Heart right ventricle (tissue), 16 donors: ENCODE measurements at regions of chr11 and their contacts with region 1.

Region 1: DNA sequence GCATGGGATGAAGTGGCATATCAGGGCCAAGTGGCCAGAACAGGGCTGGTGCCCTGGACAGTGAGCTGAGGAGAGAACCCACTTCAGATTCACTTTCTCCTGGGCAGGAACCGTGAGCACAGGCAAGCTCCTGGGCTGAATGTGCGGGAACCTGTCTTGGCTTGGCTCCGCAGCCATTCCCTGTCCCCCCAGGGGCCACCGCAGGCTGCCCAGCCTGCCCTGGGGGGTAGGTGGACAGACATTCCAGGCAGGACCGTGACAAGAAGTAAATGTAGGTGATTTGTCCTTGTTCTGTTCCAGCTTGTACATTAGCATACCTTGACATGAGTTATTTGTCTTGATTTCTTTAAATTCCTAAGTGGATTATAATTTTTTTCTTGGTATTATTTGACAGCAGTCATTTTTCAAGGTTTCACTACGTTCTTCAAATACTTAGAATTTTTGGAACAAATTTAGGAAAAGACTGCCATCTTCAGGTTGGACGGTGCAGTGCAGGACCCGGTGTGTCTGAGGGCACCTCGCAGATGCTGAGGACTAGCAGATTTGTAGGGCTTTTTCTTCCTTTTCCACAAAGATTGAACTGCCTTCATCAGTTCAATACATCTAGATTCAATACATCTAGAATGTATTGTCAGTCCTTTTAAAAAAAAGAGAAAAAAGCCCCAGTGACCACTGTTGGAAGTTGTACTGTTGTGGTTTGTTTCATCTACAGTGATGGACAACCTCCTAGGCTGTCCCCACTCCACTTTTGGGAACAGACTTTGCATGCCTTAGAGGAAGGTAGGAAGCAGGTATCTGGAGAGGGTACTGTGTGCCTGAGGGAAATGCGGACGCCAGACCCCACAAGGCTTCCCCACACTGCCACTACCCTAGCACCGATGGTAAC is 115.1 kb upstream of the RASSF10 start:
- DNase-seq: peak; percentile 60 to 66
- ATAC-seq: peak in 3 of 8 donors; percentile 23 to 31 (median 30)
- H3K4me3 ChIP-seq: no peak overlapping the region
- H3K27ac ChIP-seq: peak overlapping the region in 5 of 10 donors; percentile 12 to 50 (median 25)
- H3K4me1 ChIP-seq: peaks cover 10 to 53% (median 33%) of the 10 kb centered on the region in 9 donors
- H3K27me3 ChIP-seq: no peaks in the 10 kb centered on the region
- CTCF ChIP-seq: peak; percentile 72 to 96 (median 90)

Region 2: DNA sequence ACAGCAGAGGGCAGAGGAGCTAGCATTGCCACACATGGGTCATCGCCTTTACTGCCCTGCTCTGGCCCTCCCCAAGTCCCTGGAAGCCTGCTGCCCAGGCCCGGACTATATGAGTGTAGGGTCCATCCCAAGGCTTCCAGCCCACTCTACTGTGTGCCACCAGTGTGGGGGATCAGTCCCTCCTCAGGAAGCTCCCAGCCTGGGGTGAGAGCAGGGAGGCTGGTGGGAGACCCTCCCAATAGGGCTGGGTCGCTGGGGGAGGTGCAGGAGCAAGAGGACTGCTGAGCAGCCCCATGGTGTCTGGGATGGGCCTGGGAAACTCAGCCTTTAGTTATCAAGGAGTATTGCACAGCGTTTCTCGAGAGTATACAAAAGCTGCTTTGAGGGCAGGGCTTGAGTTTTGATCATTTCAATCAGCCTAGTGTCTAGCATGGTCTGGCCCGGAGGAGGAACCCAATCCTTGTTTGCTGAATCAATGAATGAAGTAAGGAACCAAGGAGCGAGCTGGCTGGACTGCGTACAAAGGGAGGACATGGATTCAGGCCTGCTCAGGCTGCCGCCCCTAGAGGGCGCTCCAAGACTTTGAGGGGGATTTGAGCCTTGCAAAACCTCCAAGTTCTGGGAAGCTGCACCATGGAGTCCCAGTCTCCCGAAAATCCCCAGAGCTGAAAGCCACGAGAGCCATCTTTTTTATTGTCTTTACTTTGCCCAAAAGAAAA is 605.7 kb before region 1 on chr11:
- intact Hi-C with region 1: loop called in 1 of 10 experiments (anchors 5 kb)
- DNase-seq: peak; percentile 77 to 83
- ATAC-seq: peak; percentile 55 to 80 (median 67)
- H3K4me3 ChIP-seq: no peak overlapping the region
- H3K27ac ChIP-seq: peak overlapping the region in 8 of 10 donors; percentile 8 to 79 (median 56)
- H3K4me1 ChIP-seq: peaks cover 0 to 47% (median 20%) of the 10 kb centered on the region in 9 donors
- H3K27me3 ChIP-seq: no peaks in the 10 kb centered on the region
- CTCF ChIP-seq: peak; percentile 78 to 92 (median 87)

Region 3: DNA sequence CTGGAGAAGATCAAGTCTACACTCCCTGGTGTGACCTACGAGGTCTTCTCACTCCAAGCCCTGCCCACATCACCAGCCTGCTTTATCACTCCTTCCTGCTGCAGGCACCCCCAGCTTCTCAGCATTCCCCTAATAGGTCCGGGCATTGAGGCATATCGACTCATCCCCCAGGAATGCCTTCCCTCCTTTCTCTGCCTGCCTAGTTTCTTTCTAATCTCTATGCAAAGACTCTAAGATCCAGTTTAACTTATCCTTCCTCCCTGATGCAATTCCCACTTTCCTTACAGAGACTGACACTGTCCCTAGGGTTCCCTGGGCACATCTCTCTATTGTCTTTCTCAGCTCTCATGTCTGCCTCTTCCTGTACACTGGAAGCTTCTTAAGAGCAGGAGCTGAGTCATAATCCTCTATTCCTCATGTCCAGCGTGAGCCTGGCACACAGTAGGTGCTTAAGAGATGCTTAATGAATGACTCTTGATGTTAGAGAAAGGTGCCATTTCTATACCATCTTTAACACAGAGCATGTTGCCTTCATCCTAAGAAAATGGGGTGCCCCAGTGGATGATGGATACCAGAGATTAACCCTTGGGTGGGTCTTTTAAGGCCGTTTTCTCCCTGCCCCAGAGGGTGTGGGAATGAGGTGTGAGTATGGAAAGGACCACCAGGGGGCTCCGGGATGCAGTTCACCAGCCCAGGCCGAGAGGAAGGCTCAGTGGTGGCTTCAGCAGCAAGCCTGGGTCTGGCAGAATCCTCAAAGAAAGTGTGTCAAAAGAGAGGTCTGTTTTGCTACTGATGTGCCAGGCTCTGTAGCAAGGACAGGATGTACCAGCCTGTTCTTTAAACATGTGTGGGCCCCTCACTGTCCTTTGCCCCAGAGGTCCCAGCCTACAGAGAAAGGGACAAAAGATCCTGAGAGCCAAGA is 482.0 kb before region 1 on chr11:
- intact Hi-C with region 1: loop called (anchors 2 to 10 kb)
- DNase-seq: peak; percentile 57 to 78
- ATAC-seq: peak; percentile 73 to 93 (median 85)
- H3K4me3 ChIP-seq: no peak overlapping the region
- H3K27ac ChIP-seq: peak overlapping the region in 4 of 10 donors; percentile 4 to 31 (median 10)
- H3K4me1 ChIP-seq: peaks cover 3 to 79% (median 53%) of the 10 kb centered on the region in 9 donors
- H3K27me3 ChIP-seq: no peaks in the 10 kb centered on the region
- CTCF ChIP-seq: peak; percentile 67 to 88 (median 80)

Region 4: DNA sequence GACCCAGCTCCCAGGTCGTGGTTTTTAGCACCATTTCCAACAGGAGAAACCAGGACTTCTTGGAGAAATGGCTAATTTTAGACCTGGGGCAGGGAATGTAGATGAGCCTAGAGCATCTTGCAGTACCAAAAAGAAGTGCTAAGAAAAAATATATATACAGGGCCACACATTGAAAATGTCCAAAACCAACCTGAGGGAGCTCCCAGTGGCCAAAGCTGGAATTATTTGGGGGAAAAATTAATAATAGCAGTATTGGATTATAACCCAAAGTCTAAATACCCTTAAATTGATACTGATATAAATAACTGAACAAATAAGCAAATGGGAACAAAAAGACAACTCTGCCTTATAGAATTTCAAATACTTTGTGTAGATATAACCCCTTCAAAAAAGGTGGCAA is 408.7 kb before region 1 on chr11:
- intact Hi-C with region 1: loop called in 1 of 10 experiments (anchors 10 kb)
- DNase-seq: no peak
- ATAC-seq: no peak
- H3K4me3 ChIP-seq: no peak overlapping the region
- H3K27ac ChIP-seq: no peak overlapping the region
- H3K4me1 ChIP-seq: peaks cover 2 to 22% (median 14%) of the 10 kb centered on the region in 9 donors
- H3K27me3 ChIP-seq: no peaks in the 10 kb centered on the region
- CTCF ChIP-seq: peak in 8 of 9 donors; percentile 13 to 44 (median 32)

Region 5: DNA sequence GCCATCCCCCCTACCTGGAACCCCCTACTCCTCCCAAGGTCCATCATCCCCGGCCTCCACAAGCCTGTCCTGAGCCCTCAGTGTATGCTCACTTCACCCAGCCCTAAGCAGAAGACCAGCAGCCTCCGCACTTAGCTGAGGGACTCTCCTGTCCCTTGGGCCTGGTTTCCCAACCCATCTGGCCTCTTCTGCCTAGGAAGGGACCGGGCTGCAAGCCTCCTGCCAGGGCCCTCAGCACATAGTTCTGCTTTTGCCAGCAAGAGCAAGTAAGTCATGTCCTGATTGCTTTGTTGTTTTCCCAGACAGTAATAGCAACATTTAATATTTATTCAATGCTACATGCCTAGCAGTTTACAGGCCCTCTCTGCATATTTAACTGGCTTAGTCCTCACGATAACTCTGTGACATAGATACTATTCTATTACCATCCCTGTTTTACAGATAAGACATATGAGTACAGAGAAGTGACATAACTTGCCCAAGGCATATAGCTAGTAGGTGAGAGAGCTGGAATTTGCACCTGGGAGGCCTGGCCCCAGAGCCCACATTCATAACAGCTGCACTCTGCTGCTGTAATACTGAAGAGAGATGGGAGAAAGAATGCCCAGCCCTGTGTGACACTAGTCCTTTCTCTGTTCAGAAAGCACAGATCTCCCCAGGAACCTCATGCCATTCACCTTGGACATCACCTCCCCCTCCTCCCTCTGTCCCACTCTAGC is 377.5 kb before region 1 on chr11:
- intact Hi-C with region 1: loop called in 2 of 10 experiments (anchors 10 kb)
- DNase-seq: no peak
- ATAC-seq: peak in 2 of 8 donors; percentile 20 to 49
- H3K4me3 ChIP-seq: no peak overlapping the region
- H3K27ac ChIP-seq: peak overlapping the region in 1 of 10 donors; percentile 7
- H3K4me1 ChIP-seq: peaks cover 0 to 15% (median 0%) of the 10 kb centered on the region in 9 donors
- H3K27me3 ChIP-seq: no peaks in the 10 kb centered on the region
- CTCF ChIP-seq: no peak

Region 6: DNA sequence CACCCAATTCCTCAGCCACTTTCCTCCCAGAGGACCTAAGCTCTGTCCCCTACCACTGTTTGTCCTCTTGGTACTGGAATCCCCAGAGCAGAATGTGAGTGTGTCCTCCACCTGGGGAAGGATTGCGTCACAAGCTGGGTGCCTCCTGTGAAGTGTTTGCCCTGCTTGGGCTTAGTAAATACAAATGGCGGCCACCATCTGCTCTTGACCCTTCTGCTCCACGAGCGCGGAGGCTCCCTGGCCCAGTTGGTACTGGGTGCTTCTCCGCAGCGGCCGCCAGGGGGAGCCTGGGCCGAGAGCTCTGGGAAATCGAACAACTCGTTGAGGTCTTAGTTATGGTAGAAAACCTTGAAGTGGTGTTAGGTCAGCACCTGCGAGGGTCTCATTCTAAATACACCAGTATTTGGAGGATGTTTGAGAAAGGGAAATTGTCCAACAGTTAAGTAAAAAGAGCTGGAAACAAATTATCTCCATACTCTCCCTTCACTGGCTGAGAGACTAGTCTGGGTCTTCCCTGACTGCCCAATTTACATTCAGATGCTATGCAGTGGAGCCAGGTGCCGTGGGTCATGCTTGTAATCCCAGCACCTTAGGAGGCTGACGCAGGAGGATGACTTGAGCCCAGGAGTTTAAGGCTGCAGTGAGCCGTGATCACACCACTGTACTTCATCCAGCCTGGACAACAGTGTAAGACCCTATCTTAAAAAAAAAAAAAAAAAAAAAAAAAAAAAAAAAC is 294.5 kb before region 1 on chr11:
- intact Hi-C with region 1: loop called in 9 of 10 experiments (anchors 2 to 10 kb)
- DNase-seq: peak; percentile 22 to 57
- ATAC-seq: peak in 7 of 8 donors; percentile 41 to 72 (median 52)
- H3K4me3 ChIP-seq: no peak overlapping the region
- H3K27ac ChIP-seq: no peak overlapping the region
- H3K4me1 ChIP-seq: peaks cover 0 to 36% (median 13%) of the 10 kb centered on the region in 9 donors
- H3K27me3 ChIP-seq: no peaks in the 10 kb centered on the region
- CTCF ChIP-seq: peak; percentile 46 to 78 (median 68)

Region 7: GRCh38 chr11:13210424-13210823 is 316.4 kb after region 1 on chr11:
- intact Hi-C with region 1: no loop called
- DNase-seq: peak in 1 of 2 donors; percentile 55
- ATAC-seq: peak in 7 of 8 donors; percentile 48 to 75 (median 68)
- H3K4me3 ChIP-seq: no peak overlapping the region
- H3K27ac ChIP-seq: no peak overlapping the region
- H3K4me1 ChIP-seq: peaks cover 0 to 27% (median 7%) of the 10 kb centered on the region in 9 donors
- H3K27me3 ChIP-seq: peaks cover 0 to 7% (median 0%) of the 10 kb centered on the region in 7 donors
- CTCF ChIP-seq: peak; percentile 40 to 77 (median 60)